ENCODE measurements at regions of chr19 and their contacts with region 1.

Region 1: DNA sequence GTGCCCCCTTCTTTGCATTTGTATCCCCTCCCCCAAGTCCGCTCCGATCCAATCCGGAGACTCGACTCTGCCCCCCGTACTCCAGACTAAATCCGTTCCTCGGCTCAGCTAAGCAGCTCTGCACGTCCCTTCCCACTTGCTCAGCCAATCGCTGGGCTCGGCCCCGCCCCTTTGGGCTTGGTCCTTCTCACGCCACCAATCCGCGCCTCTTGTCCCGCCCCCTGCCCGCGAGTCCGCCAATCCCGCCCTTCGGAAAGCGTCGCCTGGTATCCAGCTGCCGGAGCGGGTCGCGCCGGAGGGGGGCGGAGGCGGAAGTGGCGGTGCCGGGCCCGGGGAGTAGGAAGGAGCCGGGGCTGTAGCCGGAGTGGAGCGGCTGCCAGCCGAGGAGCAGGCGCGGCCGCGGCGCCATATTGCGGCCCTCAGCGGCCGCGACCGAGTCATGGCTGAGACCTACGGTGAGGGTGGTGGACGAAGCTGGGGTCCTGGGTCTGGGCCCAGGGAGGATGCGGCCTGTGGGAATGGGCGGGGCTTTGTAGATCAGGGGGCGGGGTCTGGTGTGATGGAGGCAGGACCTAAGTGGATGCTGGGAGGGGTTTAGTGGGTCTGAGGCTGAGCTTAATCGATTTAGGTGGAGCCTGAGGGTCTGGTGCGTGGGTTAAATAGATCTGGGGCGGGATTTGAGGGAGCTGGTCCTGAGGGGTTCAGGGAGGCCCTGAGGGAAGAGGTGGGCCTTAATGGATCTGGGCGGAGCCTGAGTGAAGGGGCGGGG is at the start of gene RAB4B:
- DNase-seq: peak; percentile 100
- ATAC-seq: peak; percentile 79
- H3K4me3 Mint-ChIP-seq: peak within 1 kb of the TSS; percentile 76
- H3K27ac Mint-ChIP-seq: peak within 1 kb of the TSS; percentile 97
- H3K4me1 Mint-ChIP-seq: peaks cover 27% of the 10 kb centered on the region
- H3K27me3 Mint-ChIP-seq: no peaks in the 10 kb centered on the region
- CTCF ChIP-seq: no peak
- total RNA-seq, gene RAB4B: 29.7 to 34.1 TPM (median 30.5 TPM) in 3 replicates

Region 2: DNA sequence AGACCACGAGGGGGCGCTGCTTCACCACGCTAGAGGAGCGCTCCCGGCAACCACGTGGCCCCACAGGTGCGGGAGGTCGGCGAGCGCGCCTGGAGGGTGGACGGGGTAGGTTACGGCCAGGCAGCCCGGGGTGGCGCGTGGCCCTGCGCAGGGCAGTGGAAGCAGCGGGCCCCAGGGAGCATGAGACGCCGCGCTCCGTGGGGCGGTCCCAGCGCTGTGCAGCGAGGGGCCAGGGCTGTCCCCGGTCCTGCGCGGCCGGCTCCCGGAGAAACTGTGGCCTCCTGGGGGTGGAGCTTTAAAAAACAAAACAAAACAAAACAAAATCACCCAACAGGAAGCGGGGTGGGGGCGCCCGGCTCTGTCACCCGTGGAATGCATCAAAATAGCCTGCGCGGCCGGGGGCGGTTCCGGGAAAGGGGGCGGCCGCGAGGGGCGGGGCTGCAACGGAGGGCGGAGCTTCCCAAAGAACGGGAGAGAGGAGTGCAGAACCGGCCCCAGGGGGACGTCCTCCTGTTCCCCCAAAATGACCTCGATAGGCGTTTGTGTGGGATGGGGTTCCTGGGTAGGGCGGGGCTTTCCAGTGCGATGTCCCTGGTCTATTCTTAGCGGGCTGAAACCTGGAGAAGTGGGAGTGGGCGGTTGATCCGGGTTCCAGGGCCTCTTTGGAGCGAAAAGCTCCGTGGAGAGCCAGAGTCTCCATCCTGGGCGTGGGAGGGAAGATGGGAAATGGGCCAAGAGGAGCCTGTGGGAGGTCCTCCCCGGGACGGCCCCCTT is 115.0 kb before region 1 on chr19:
- CTCF ChIA-PET with region 1: interaction called, 20 read pairs
- POLR2A ChIA-PET with region 1: interaction called, 4 read pairs
- DNase-seq: peak; percentile 95
- ATAC-seq: peak; percentile 85
- H3K4me3 Mint-ChIP-seq: peak overlapping the region; percentile 80
- H3K27ac Mint-ChIP-seq: no peak overlapping the region
- H3K4me1 Mint-ChIP-seq: peaks cover 2% of the 10 kb centered on the region; the same call in 1 of the 2 replicates
- H3K27me3 Mint-ChIP-seq: peaks cover 18% of the 10 kb centered on the region
- CTCF ChIP-seq: peak; percentile 97

Region 3: GRCh38 chr19:40702337-40703012 is 75.6 kb before region 1 on chr19:
- CTCF ChIA-PET with region 1: interaction called, 19 read pairs
- POLR2A ChIA-PET with region 1: no interaction called
- DNase-seq: peak; percentile 78
- ATAC-seq: peak; percentile 95
- H3K4me3 Mint-ChIP-seq: no peak overlapping the region
- H3K27ac Mint-ChIP-seq: peak overlapping the region; percentile 85
- H3K4me1 Mint-ChIP-seq: peaks cover 8% of the 10 kb centered on the region; the same call in 1 of the 2 replicates
- H3K27me3 Mint-ChIP-seq: no peaks in the 10 kb centered on the region
- CTCF ChIP-seq: peak; percentile 18; the same call in 1 of the 2 replicates

Region 4: GRCh38 chr19:40744554-40745401 is 33.3 kb before region 1 on chr19:
- CTCF ChIA-PET with region 1: interaction called, 22 read pairs
- POLR2A ChIA-PET with region 1: interaction called, 34 read pairs
- DNase-seq: peak; percentile 54
- ATAC-seq: peak; percentile 59
- H3K4me3 Mint-ChIP-seq: no peak overlapping the region
- H3K27ac Mint-ChIP-seq: peak overlapping the region; percentile 72
- H3K4me1 Mint-ChIP-seq: peaks cover 25% of the 10 kb centered on the region
- H3K27me3 Mint-ChIP-seq: no peaks in the 10 kb centered on the region
- CTCF ChIP-seq: 0 out of 2 replicates have a peak, but pooled peaks have one; percentile 26

Region 5: DNA sequence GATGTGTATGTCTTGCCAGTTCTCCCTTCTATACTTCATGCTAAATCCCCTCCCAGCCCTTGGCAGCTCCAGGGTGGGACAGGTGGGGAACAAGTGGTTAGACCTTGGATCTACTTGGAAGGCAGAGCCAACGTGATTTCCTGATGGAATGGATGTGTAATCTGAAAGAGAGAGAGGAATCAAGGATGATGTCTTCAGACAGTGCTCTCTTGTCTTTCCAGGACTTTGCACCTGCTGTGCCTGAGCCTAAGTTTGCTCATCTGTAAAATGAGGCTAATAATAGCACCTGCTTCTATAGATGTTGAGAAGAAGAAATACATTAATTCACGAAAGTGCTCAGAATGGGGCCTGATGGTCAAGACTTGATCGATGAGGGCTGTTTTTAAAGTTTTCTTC is 13.9 kb after region 1 on chr19:
- CTCF ChIA-PET with region 1: interaction called, 17 read pairs
- POLR2A ChIA-PET with region 1: interaction called, 48 read pairs
- DNase-seq: no peak
- ATAC-seq: no peak
- H3K4me3 Mint-ChIP-seq: no peak overlapping the region
- H3K27ac Mint-ChIP-seq: no peak overlapping the region
- H3K4me1 Mint-ChIP-seq: no peaks in the 10 kb centered on the region
- H3K27me3 Mint-ChIP-seq: no peaks in the 10 kb centered on the region
- CTCF ChIP-seq: no peak

Region 6: GRCh38 chr19:40806488-40807468 is 28.7 kb after region 1 on chr19:
- CTCF ChIA-PET with region 1: interaction called, 71 read pairs
- POLR2A ChIA-PET with region 1: interaction called, 25 read pairs
- DNase-seq: peak; percentile 96
- ATAC-seq: peak; percentile 60
- H3K4me3 Mint-ChIP-seq: peak overlapping the region; percentile 39
- H3K27ac Mint-ChIP-seq: peak overlapping the region; percentile 85
- H3K4me1 Mint-ChIP-seq: peaks cover 73% of the 10 kb centered on the region
- H3K27me3 Mint-ChIP-seq: no peaks in the 10 kb centered on the region; the same call in 1 of the 2 replicates
- CTCF ChIP-seq: peak; percentile 77